Activated T-helper 2 cell treated with anti-CD3 and anti-CD28 coated beads, Interferon-gamma antibody, Interleukin-2, Interleukin-4, amounts not matched to agents 10 μg/mL and 5 μg/mL and 100 μg/mL, durations not matched to agents 14 hours and 24 hours and 36 hours (primary cell): ENCODE measurements at regions of chr17 and their contacts with region 1.

Region 1: DNA sequence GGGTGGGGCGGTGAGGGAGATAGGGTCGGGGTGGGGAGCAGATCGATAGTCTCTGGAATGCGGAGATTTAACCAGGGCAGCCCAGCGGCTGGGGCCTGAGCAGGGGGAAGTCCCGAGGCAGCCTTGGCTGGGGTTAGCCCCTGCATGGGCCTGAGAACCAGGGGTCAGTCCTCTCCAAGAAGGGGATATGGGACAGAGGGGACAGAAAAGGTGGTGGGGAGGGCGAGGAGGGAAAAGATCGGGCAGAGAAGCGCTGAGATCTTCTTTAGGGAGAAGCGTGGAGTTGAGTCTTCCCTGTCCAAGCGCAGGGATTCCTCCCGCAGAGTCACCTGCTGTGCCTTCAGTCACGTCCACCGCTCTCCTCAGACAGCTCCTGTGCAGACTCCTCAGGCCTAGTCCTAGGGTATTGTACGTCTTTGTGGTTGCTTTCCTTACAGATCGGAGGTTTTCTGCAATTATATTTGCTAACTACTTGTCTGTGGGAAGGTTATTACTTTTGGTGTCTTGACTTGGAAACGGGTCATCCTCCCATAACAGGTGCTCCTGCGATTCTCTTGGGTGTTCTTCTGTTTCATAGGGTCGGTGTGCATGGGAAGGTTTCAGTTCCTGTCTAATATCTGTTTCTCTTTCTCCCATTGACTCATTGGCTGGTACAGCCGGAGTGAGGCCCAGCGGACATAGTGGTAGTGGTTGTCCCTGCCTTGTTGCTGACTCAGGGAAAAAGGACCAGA is 952 bp downstream of the CD300A start:
- DNase-seq: no peak
- H3K4me3 Mint-ChIP-seq: no peak overlapping the region
- H3K27ac Mint-ChIP-seq: peak overlapping the region; percentile 72
- H3K4me1 Mint-ChIP-seq: peaks cover 41% of the 10 kb centered on the region
- H3K27me3 Mint-ChIP-seq: no peaks in the 10 kb centered on the region

Region 2: GRCh38 chr17:74478420-74479100 is 11.2 kb after region 1 on chr17:
- intact Hi-C with region 1: loop called (anchors 1 kb)
- DNase-seq: peak; percentile 60
- H3K4me3 Mint-ChIP-seq: peak overlapping the region; percentile 37
- H3K27ac Mint-ChIP-seq: peak overlapping the region; percentile 38
- H3K4me1 Mint-ChIP-seq: peaks cover 46% of the 10 kb centered on the region
- H3K27me3 Mint-ChIP-seq: no peaks in the 10 kb centered on the region